ENCODE measurements at regions of chr20 and their contacts with region 1.

Region 1: DNA sequence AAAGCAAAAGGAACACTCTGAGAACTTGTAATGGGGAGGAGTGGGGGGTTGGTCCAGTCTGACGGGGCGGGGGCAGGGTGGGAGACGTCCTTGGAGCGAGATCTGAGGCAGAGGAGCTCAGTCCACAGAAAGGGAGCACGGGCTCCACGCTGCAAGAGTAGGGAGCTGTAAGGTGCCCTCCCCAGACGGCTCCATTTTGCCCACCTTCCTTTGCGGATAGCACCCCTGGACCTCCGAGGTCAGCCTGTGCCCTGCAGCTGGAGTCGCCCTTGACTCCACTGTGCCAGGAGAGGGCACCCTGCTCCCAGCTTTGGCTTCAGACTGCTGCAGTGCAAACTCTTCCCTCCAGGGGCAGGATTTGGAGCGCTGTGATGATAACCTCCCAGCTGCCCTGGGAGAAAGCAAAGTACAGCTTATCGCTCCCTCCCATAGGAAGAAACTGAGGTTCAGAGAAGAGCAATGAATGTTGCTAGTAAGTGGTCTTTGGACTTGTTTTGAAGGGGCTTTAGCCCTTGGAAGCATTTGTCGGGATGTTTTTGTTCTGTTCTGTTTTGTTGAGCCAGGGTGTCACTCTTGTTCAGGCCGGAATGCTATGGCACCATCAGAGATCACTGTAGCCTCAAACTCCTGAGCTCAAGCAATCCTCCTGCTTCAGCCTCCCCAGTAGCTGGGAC is 9.5 kb upstream of the AHCY start:
- DNase-seq: peak; percentile 94
- ATAC-seq: peak; percentile 99
- H3K4me3 Mint-ChIP-seq: no peak overlapping the region
- H3K27ac Mint-ChIP-seq: no peak overlapping the region
- H3K4me1 Mint-ChIP-seq: peaks cover 7% of the 10 kb centered on the region
- H3K27me3 Mint-ChIP-seq: peaks cover 18% of the 10 kb centered on the region

Region 2: GRCh38 chr20:34334654-34335407 is 22.1 kb after region 1 on chr20:
- CTCF ChIA-PET with region 1: interaction called, 11 read pairs
- POLR2A ChIA-PET with region 1: no interaction called
- intact Hi-C with region 1: no loop called
- DNase-seq: no peak
- ATAC-seq: no peak
- H3K4me3 Mint-ChIP-seq: no peak overlapping the region
- H3K27ac Mint-ChIP-seq: no peak overlapping the region
- H3K4me1 Mint-ChIP-seq: no peaks in the 10 kb centered on the region
- H3K27me3 Mint-ChIP-seq: no peaks in the 10 kb centered on the region

Region 3: GRCh38 chr20:34415079-34415478 is 102.4 kb after region 1 on chr20:
- CTCF ChIA-PET with region 1: interaction called, 12 read pairs
- POLR2A ChIA-PET with region 1: no interaction called
- intact Hi-C with region 1: no loop called
- DNase-seq: no peak
- ATAC-seq: no peak
- H3K4me3 Mint-ChIP-seq: no peak overlapping the region
- H3K27ac Mint-ChIP-seq: peak overlapping the region; percentile 48
- H3K4me1 Mint-ChIP-seq: peaks cover 18% of the 10 kb centered on the region
- H3K27me3 Mint-ChIP-seq: no peaks in the 10 kb centered on the region

Region 4: DNA sequence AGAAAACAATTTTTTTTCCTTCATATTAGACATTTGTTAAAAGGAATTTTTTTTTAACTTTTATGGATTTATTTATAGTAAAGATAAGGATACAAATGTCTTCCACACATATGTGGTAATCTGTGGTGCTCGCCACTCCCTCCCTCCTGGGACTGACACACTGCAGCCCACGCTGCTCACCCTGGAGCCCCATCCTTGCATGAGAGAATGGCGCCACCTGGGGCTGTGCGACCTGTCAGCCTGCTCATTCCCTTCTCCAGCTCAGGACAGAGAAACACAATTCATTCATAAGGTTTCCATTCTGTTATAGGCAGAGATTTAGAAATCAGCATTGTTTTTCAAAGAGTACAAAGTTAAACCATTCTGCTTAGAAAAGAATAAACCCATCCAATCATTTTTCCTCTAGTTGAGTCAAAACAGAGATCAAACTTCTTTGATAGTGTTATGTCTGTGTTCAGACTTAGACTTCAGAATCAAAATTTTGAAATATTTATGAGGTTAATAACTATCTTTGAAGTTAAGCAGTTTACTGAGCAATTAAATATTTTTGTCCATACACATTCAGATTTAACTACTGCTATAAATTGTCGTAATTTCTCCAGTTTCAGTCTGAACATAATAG is 160.7 kb after region 1 on chr20:
- CTCF ChIA-PET with region 1: interaction called, 20 read pairs
- POLR2A ChIA-PET with region 1: no interaction called
- intact Hi-C with region 1: loop called (anchors 1 kb)
- DNase-seq: peak; percentile 72
- ATAC-seq: peak; percentile 61
- H3K4me3 Mint-ChIP-seq: no peak overlapping the region
- H3K27ac Mint-ChIP-seq: peak overlapping the region; percentile 37
- H3K4me1 Mint-ChIP-seq: peaks cover 6% of the 10 kb centered on the region
- H3K27me3 Mint-ChIP-seq: no peaks in the 10 kb centered on the region

Region 5: DNA sequence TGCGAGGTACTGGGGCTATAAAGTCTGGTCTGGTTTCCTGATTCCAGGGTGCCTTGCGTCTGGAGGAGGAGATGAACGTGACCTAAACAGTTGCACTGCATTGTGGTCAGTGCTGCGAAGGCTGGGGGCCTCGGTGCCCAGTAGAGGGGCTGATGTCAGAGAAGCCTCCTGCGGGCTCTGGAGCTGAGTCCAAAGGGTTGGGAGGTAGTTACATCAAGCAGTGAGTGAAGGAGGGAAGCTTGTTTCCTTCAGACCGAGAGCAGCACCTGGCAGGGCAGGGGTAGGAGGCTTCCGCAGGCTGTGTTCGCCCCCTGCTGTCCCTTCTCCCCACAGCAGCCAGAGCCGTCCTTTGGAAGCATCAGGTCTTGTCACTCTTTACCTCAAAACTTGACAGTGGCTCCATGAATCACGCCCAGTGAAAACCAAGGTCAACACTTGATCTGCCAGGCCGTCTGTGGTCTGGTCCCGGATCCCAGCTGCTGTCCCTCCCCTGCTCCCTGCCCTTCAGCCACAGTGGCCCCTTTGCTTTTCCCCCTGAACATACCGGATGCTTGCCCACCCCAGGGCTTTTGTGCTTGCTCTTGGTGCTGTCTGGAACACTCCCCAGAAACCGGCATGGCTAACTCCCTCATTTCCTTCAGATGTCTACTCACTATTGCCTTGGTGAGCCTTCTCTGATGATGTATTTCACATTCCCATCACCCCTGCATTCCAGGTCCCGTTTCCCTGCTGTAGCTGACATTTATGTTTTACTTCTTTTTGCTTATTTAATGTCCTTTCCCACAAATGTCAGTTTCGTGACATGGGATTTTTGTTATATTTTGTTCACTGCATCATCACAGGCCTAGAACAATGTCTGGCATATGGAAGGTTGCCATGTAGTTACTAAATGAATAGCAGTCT is 210.5 kb after region 1 on chr20:
- CTCF ChIA-PET with region 1: interaction called, 82 read pairs
- POLR2A ChIA-PET with region 1: interaction called, 3 read pairs
- intact Hi-C with region 1: loop called (anchors 1 kb)
- DNase-seq: peak; percentile 78
- ATAC-seq: peak; percentile 83
- H3K4me3 Mint-ChIP-seq: no peak overlapping the region
- H3K27ac Mint-ChIP-seq: peak overlapping the region; percentile 35
- H3K4me1 Mint-ChIP-seq: peaks cover 40% of the 10 kb centered on the region
- H3K27me3 Mint-ChIP-seq: no peaks in the 10 kb centered on the region

Region 6: DNA sequence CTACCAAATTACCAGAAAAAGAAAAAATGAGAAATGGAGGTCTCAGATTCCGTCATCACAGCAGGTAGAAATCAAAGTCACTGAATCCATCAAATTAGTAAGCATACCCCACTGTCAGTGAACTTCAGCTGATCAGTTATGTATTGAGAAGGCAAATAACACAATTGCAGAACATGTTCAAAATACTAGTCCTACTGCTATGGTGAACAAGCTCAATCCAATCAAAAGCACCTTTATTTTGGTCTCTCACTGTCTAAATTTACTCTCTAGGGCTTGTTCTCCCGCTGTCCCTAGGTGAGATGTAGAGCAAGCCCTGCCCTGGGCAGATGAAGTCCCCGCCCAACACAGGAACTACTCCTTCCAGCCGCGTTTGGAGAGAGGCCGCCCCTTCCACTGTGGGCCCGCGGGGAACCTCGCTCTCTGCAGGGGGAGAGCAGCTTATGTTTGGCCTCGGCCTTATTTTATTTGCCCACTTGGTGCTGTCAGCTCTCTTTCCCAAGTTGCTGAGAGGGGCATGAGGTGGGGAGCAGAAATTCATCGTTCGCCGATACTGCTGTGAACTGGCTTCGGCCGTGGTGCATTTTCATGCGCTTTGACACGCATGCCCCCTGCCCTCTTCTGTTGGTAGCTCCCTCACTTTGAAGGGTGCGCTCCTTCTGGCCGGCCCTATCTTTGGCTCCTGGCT is 231.6 kb after region 1 on chr20:
- CTCF ChIA-PET with region 1: interaction called, 23 read pairs
- POLR2A ChIA-PET with region 1: no interaction called
- intact Hi-C with region 1: loop called in 1 of 2 experiments (anchors 5 kb)
- DNase-seq: peak; percentile 39
- ATAC-seq: peak; percentile 76
- H3K4me3 Mint-ChIP-seq: peak overlapping the region; percentile 14
- H3K27ac Mint-ChIP-seq: no peak overlapping the region
- H3K4me1 Mint-ChIP-seq: peaks cover 19% of the 10 kb centered on the region
- H3K27me3 Mint-ChIP-seq: no peaks in the 10 kb centered on the region

Region 7: GRCh38 chr20:34768096-34768495 is 455.4 kb after region 1 on chr20:
- CTCF ChIA-PET with region 1: interaction called, 14 read pairs
- POLR2A ChIA-PET with region 1: interaction called, 4 read pairs
- intact Hi-C with region 1: loop called (anchors 1 kb)
- DNase-seq: no peak
- ATAC-seq: no peak
- H3K4me3 Mint-ChIP-seq: no peak overlapping the region
- H3K27ac Mint-ChIP-seq: no peak overlapping the region
- H3K4me1 Mint-ChIP-seq: no peaks in the 10 kb centered on the region
- H3K27me3 Mint-ChIP-seq: no peaks in the 10 kb centered on the region

Measured in activated CD4-positive, alpha-beta T cell treated with anti-CD3 and anti-CD28 coated beads for 36 hours (primary cell).